ENCODE measurements at regions of chr3 and their contacts with region 1.

Region 1: DNA sequence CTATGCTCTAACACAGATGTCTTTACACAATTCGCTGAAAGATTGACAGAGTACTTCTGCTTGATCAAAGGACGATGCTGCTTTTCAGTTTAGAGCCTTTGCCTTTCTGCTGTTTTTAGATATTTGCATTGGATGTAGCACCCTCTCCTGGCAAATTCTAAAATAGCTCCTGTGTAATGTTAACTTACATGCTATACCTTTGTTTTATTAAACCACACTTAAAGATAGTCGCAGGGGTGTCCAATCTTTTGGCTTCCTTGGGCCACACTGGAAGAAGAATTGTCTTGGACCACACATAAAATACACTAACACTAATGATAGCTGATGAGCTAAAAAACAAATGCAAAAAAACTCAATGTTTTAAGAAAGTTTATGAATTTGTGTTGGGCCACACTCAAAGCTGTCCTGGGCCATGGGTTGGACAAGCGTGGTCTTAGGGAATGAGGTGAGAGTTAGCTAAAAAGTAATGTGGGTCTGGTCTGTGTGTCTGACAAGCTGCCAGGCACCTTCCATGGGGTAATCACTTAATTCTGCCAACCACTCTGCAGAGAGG is 62.9 kb downstream of the ATG7 start:
- DNase-seq: peak; percentile 9
- H3K4me3 Mint-ChIP-seq: no peak overlapping the region
- H3K27ac Mint-ChIP-seq: no peak overlapping the region
- H3K4me1 Mint-ChIP-seq: peaks cover 7% of the 10 kb centered on the region
- H3K27me3 Mint-ChIP-seq: no peaks in the 10 kb centered on the region

Region 2: DNA sequence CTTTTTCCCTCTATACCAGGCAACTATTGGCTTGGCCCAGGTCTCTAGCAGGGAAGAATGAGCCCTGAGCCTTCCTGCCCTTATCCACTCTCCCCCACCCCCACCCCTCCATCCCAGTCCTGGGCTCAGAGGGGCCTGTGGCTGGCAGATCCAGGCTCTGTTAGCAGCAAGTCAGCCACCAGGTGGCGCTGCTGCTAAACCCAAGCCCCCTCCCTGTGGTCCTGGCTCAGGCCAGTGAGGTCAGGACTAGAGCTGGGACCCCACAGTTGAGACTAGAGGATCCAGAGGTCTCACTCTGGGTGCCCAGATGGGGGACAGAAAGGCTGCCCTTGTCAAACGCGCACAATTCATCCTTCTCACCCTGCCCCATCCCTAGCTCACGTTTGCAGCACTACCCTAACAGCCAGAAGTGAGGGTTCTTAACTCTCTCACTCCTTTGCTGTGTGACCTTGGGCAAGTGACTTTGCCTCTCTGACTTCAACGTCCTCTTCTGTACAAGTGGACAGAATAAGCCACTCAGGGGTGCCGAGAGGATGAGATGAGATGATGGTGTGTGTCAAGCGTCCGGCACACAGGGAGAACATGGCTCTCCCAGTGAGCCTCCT is 389.3 kb before region 1 on chr3:
- CTCF ChIA-PET with region 1: no interaction called
- intact Hi-C with region 1: loop called (anchors 5 kb)
- DNase-seq: peak; percentile 70
- H3K4me3 Mint-ChIP-seq: no peak overlapping the region
- H3K27ac Mint-ChIP-seq: no peak overlapping the region
- H3K4me1 Mint-ChIP-seq: no peaks in the 10 kb centered on the region
- H3K27me3 Mint-ChIP-seq: peaks cover 15% of the 10 kb centered on the region

Region 3: GRCh38 chr3:11155341-11156025 is 179.6 kb before region 1 on chr3:
- CTCF ChIA-PET with region 1: interaction called, 3 read pairs
- intact Hi-C with region 1: loop called (anchors 2 kb)
- DNase-seq: peak; percentile 36
- H3K4me3 Mint-ChIP-seq: no peak overlapping the region
- H3K27ac Mint-ChIP-seq: no peak overlapping the region
- H3K4me1 Mint-ChIP-seq: peaks cover 8% of the 10 kb centered on the region
- H3K27me3 Mint-ChIP-seq: peaks cover 50% of the 10 kb centered on the region

Region 4: DNA sequence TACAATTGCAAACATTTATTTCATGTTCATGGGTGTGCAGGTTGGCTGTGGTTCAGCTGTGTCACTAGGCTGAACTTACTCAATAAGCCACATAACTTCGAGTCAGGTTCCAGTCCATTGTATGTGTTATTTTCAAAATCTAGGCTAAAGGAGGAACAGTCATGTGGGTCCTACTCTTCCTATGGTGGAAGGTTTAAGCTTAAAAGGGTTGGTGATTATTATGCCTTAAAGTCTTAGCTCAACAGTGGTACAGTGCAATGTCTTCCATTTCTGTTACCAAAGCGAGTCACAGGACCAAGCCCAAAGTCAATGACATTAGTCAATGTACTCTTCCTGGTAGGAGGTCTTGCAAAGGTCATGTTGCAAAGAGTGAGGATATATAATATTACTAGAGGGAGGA is 15.2 kb after region 1 on chr3:
- CTCF ChIA-PET with region 1: interaction called, 11 read pairs
- intact Hi-C with region 1: no loop called
- DNase-seq: no peak
- H3K4me3 Mint-ChIP-seq: no peak overlapping the region
- H3K27ac Mint-ChIP-seq: no peak overlapping the region
- H3K4me1 Mint-ChIP-seq: no peaks in the 10 kb centered on the region
- H3K27me3 Mint-ChIP-seq: no peaks in the 10 kb centered on the region